ENCODE measurements at regions of chr2 and their contacts with region 1.

Region 1: DNA sequence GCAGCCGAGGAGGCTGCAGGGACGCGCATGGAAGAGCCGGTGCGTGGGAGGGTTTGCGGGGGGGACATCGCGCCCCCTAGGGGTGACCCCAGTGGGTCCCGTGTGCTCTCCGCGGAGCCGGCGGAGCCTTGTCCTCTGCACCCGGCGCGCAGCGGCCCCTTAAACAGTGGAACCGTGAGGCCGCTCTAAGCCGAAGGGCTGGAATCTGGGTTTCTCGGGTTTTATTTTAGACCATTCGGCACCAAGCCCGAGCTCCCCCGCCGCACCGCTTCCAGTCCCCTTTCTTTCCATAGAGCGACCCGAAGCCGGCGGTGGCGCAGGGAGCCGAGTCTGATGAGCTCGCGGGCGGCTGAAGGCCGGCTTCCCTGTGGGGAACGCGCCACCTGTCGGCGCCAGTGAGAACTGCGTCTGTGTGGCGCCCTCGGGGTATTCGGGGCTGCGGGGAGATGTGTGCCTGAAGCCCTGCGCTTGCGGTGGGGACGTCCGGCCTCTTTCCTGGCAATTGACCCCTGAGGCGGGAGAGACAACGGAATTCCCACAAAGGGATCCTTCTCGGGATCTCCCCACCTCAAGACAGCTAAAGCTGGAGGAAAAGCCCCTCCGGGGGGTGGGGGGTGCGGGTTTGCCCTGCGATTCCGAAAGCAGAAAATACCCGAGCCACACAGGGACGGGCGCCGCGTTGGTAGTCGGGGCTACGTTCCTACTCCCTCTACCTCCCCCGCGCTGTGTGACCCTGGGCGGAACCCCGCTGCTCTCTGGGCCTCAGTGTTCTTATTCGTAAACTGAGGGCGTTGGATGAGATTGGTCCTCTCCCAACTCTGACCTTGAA is 8.2 kb upstream of the EN1 start:
- DNase-seq: peak; percentile 78 to 87
- ATAC-seq: peak; percentile 91 to 96 (median 93)
- H3K4me3 ChIP-seq: peak overlapping the region; percentile 6
- H3K4me3 Mint-ChIP-seq: peak overlapping the region; percentile 74
- H3K27ac ChIP-seq: no peak overlapping the region
- H3K27ac Mint-ChIP-seq: no peak overlapping the region
- H3K4me1 ChIP-seq: peaks cover 10% of the 10 kb centered on the region
- H3K4me1 Mint-ChIP-seq: peaks cover 12 to 19% of the 10 kb centered on the region in 2 donors
- H3K27me3 ChIP-seq: peaks cover 62% of the 10 kb centered on the region
- H3K27me3 Mint-ChIP-seq: peaks cover 67 to 72% of the 10 kb centered on the region in 2 donors
- CTCF ChIP-seq: peak; percentile 93

Region 2: DNA sequence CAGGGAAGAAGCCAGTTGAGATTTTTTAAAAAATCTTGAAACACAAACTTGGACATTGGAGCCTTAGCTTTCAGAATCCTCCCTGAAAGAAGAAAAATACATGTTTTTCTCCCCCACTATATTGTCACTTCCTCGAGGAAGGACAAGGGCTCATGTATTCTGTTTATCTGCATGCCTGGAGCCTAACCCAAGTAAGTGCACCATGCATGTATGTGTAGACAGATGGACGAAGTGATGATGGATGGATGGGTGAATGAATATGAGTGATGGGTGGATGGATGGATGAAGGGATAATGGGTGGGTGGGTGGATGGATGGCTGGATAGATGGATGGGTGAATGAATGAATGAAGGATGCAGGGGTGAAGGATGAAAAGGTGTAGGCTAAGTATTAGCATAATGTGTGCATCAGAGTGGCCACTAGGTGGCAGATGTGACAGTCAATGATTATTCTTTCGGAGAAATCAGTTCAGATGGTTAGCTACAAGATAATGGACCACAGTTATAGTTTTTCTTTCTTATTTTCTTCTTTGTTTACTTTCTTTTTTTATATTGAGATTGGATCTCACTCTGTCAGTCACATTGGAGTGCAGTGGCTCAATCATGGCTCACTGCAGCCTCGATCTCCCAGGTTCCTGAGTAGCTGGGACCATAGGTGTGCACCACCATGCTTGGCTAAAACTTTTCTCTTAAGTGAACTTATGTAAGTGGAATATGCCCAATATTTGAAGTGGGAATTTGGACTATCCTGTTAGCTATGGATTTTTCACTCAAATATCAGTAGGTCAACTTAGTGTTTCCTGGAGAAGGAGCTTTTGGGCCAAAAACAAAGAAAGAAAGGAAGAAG is 823.3 kb before region 1 on chr2:
- intact Hi-C with region 1: loop called (anchors 5 kb)
- DNase-seq: peak in 1 of 2 donors; percentile 69
- ATAC-seq: peak; percentile 76 to 88 (median 77)
- H3K4me3 ChIP-seq: no peak overlapping the region
- H3K4me3 Mint-ChIP-seq: no peak overlapping the region
- H3K27ac ChIP-seq: no peak overlapping the region
- H3K27ac Mint-ChIP-seq: no peak overlapping the region
- H3K4me1 ChIP-seq: no peaks in the 10 kb centered on the region
- H3K4me1 Mint-ChIP-seq: no peaks in the 10 kb centered on the region
- H3K27me3 ChIP-seq: peaks cover 7% of the 10 kb centered on the region
- H3K27me3 Mint-ChIP-seq: peaks cover 36 to 54% of the 10 kb centered on the region in 2 donors
- CTCF ChIP-seq: peak; percentile 85

Region 3: GRCh38 chr2:118202707-118203303 is 652.9 kb before region 1 on chr2:
- intact Hi-C with region 1: loop called (anchors 5 kb)
- DNase-seq: peak; percentile 41 to 74
- ATAC-seq: peak; percentile 81 to 99 (median 90)
- H3K4me3 ChIP-seq: no peak overlapping the region
- H3K4me3 Mint-ChIP-seq: no peak overlapping the region
- H3K27ac ChIP-seq: no peak overlapping the region
- H3K27ac Mint-ChIP-seq: no peak overlapping the region
- H3K4me1 ChIP-seq: peaks cover 4% of the 10 kb centered on the region
- H3K4me1 Mint-ChIP-seq: peaks cover 5 to 6% of the 10 kb centered on the region in 2 donors
- H3K27me3 ChIP-seq: no peaks in the 10 kb centered on the region
- H3K27me3 Mint-ChIP-seq: peaks cover 24 to 42% of the 10 kb centered on the region in 2 donors
- CTCF ChIP-seq: peak; percentile 84

Region 4: GRCh38 chr2:118221666-118222594 is 633.7 kb before region 1 on chr2:
- intact Hi-C with region 1: loop called (anchors 1 kb)
- DNase-seq: peak in 1 of 2 donors; percentile 78
- ATAC-seq: peak; percentile 73
- H3K4me3 ChIP-seq: no peak overlapping the region
- H3K4me3 Mint-ChIP-seq: peak overlapping the region; percentile 93
- H3K27ac ChIP-seq: no peak overlapping the region
- H3K27ac Mint-ChIP-seq: peak overlapping the region in 1 of 2 donors; percentile 14
- H3K4me1 ChIP-seq: peaks cover 17% of the 10 kb centered on the region
- H3K4me1 Mint-ChIP-seq: peaks cover 25 to 35% of the 10 kb centered on the region in 2 donors
- H3K27me3 ChIP-seq: peaks cover 48% of the 10 kb centered on the region
- H3K27me3 Mint-ChIP-seq: peaks cover 58 to 72% of the 10 kb centered on the region in 2 donors
- CTCF ChIP-seq: peak; percentile 80